IMR-90 (cell line): ENCODE measurements at regions of chrX and their contacts with region 1.

Region 1: GRCh38 chrX:17374619-17375366 is at the start of gene NHS:
- DNase-seq: peak; percentile 63
- ATAC-seq: peak; percentile 78
- H3K4me3 ChIP-seq: peak within 1 kb of the TSS; percentile 98
- H3K27ac ChIP-seq: peak within 1 kb of the TSS; percentile 32
- H3K4me1 ChIP-seq: no peaks in the 10 kb centered on the region
- H3K27me3 ChIP-seq: peaks cover 4% of the 10 kb centered on the region
- CTCF ChIP-seq: peak; percentile 36; the same call in 1 of the 2 replicates
- POLR2A ChIP-seq: no peak
- RAD21 ChIP-seq: peak; percentile 26; the same call in 1 of the 2 replicates
- total RNA-seq, gene NHS: 0.83 and 0.90 TPM in 2 replicates

Region 2: GRCh38 chrX:17474892-17475291 is 100.1 kb after region 1 on chrX:
- CTCF ChIA-PET with region 1: no interaction called
- POLR2A ChIA-PET with region 1: no interaction called
- dilution Hi-C with region 1: no loop called
- in situ Hi-C with region 1: no loop called
- intact Hi-C with region 1: loop called (anchors 5 kb)
- DNase-seq: peak; percentile 55
- ATAC-seq: peak; percentile 42
- H3K4me3 ChIP-seq: no peak overlapping the region
- H3K27ac ChIP-seq: no peak overlapping the region
- H3K4me1 ChIP-seq: peaks cover 3% of the 10 kb centered on the region
- H3K27me3 ChIP-seq: peaks cover 4% of the 10 kb centered on the region
- CTCF ChIP-seq: no peak
- POLR2A ChIP-seq: no peak
- RAD21 ChIP-seq: no peak

Region 3: GRCh38 chrX:17527135-17527701 is 152.4 kb after region 1 on chrX:
- CTCF ChIA-PET with region 1: interaction called, 3 read pairs
- POLR2A ChIA-PET with region 1: no interaction called
- dilution Hi-C with region 1: no loop called
- in situ Hi-C with region 1: loop called (anchors 10 kb)
- intact Hi-C with region 1: loop called (anchors 2 kb)
- DNase-seq: peak; percentile 35
- ATAC-seq: peak; percentile 28; the same call in 1 of the 2 replicates
- H3K4me3 ChIP-seq: no peak overlapping the region
- H3K27ac ChIP-seq: peak overlapping the region; percentile 42; the same call in 1 of the 2 replicates
- H3K4me1 ChIP-seq: peaks cover 9% of the 10 kb centered on the region
- H3K27me3 ChIP-seq: no peaks in the 10 kb centered on the region
- CTCF ChIP-seq: no peak
- POLR2A ChIP-seq: no peak
- RAD21 ChIP-seq: no peak

Region 4: DNA sequence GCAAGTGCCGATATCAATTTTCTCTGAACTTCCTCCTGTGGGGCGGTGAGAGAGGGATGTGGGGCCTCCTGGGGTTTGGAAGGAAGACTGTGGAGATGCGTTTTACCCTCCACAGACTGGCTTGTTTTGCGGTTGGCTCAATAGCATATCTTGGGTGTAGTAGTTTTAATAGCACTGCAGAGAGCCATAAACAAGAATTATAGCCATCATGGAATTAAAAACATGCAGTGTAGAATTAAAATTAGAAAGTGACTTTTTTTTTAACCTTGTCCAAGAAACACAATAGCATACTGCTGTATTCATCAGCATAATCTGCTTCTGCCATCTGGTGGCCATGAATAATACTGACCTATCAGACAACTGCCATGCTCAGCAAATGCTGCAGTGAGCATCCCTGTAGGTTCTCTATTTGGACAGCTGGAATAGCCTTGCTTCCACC is 315.2 kb after region 1 on chrX:
- CTCF ChIA-PET with region 1: no interaction called
- POLR2A ChIA-PET with region 1: no interaction called
- dilution Hi-C with region 1: no loop called
- in situ Hi-C with region 1: no loop called
- intact Hi-C with region 1: loop called (anchors 2 kb)
- DNase-seq: peak; percentile 72
- ATAC-seq: peak; percentile 94
- H3K4me3 ChIP-seq: no peak overlapping the region
- H3K27ac ChIP-seq: no peak overlapping the region
- H3K4me1 ChIP-seq: no peaks in the 10 kb centered on the region
- H3K27me3 ChIP-seq: no peaks in the 10 kb centered on the region; the same call in 1 of the 2 replicates
- CTCF ChIP-seq: peak; percentile 80
- POLR2A ChIP-seq: no peak
- RAD21 ChIP-seq: peak; percentile 88